Mammary epithelial cell (primary cell): ENCODE measurements at regions of chr1 and their contacts with region 1.

Region 1: DNA sequence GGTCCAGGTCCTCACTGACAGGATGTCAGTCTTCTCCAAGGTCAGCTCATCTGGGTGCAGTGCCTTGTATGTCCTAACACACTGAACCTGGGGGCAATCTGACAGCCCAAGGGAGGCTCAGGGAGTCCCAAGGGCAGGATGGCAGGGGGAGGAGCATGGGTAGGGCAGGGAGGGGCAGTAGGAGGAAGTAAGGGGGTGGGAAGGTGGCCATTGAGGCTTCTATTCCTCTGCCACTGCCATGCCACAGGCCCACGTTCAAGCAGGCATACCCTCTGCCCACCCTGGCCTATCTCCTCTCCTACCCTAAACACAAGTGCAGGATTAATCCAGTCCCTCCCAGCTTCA is 13.3 kb downstream of the ARHGEF19 start:
- DNase-seq: no peak
- H3K4me3 ChIP-seq: no peak overlapping the region
- H3K27ac ChIP-seq: no peak overlapping the region
- H3K4me1 ChIP-seq: no peaks in the 10 kb centered on the region
- H3K27me3 ChIP-seq: no peaks in the 10 kb centered on the region
- CTCF ChIP-seq: no peak

Region 2: GRCh38 chr1:16236511-16237342 is 37.6 kb after region 1 on chr1 and contains the start of gene CPLANE2:
- CTCF ChIA-PET with region 1: no interaction called
- dilution Hi-C with region 1: loop called (anchors 10 kb)
- in situ Hi-C with region 1: loop called in 1 of 2 experiments (anchors 5 kb)
- intact Hi-C with region 1: no loop called
- DNase-seq: peak; percentile 87
- H3K4me3 ChIP-seq: peak within 1 kb of the TSS; percentile 57 to 71 (median 62)
- H3K27ac ChIP-seq: peak within 1 kb of the TSS; percentile 64
- H3K4me1 ChIP-seq: peaks cover 23% of the 10 kb centered on the region
- H3K27me3 ChIP-seq: no peaks in the 10 kb centered on the region
- CTCF ChIP-seq: no peak
- total RNA-seq, gene CPLANE2: 13.3 to 14.8 TPM

Region 3: DNA sequence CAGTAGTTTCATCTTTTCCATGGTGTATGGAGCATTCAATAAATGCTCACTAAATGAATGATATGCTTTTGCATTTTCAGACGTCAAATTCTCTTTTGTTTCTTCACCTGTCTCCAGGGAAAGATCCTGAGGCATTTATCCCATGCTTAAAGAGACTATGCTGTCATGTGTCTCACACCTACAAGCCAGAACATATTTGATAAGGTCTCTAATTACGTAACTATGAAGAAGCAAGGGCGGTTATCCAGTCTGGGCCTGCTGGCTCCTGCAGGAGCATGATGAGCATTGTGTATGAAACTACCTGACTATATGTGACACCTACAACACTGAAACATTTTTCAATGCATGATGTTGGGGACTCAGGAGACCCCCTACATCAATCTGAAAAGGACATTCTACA is 101.3 kb after region 1 on chr1:
- CTCF ChIA-PET with region 1: no interaction called
- dilution Hi-C with region 1: loop called (anchors 5 kb)
- in situ Hi-C with region 1: no loop called
- intact Hi-C with region 1: no loop called
- DNase-seq: peak; percentile 96
- H3K4me3 ChIP-seq: no peak overlapping the region
- H3K27ac ChIP-seq: peak overlapping the region; percentile 59
- H3K4me1 ChIP-seq: peaks cover 18% of the 10 kb centered on the region
- H3K27me3 ChIP-seq: no peaks in the 10 kb centered on the region
- CTCF ChIP-seq: no peak